Activated CD4-positive, alpha-beta memory T cell treated with anti-CD3 and anti-CD28 coated beads for 36 hours (primary cell): ENCODE measurements at regions of chr17 and their contacts with region 1.

Region 1: GRCh38 chr17:34156741-34157589 is 98.1 kb upstream of the CCL2 start:
- DNase-seq: no peak
- H3K4me3 Mint-ChIP-seq: no peak overlapping the region
- H3K27ac Mint-ChIP-seq: no peak overlapping the region
- H3K4me1 Mint-ChIP-seq: peaks cover 8% of the 10 kb centered on the region
- H3K27me3 Mint-ChIP-seq: peaks cover 34% of the 10 kb centered on the region

Region 2: GRCh38 chr17:34171245-34171818 is 14.4 kb after region 1 on chr17:
- CTCF ChIA-PET with region 1: interaction called, 15 read pairs
- POLR2A ChIA-PET with region 1: no interaction called
- intact Hi-C with region 1: no loop called
- DNase-seq: peak; percentile 66
- H3K4me3 Mint-ChIP-seq: no peak overlapping the region
- H3K27ac Mint-ChIP-seq: no peak overlapping the region
- H3K4me1 Mint-ChIP-seq: no peaks in the 10 kb centered on the region
- H3K27me3 Mint-ChIP-seq: peaks cover 9% of the 10 kb centered on the region